ENCODE measurements at regions of chr3 and their contacts with region 1.

Region 1: DNA sequence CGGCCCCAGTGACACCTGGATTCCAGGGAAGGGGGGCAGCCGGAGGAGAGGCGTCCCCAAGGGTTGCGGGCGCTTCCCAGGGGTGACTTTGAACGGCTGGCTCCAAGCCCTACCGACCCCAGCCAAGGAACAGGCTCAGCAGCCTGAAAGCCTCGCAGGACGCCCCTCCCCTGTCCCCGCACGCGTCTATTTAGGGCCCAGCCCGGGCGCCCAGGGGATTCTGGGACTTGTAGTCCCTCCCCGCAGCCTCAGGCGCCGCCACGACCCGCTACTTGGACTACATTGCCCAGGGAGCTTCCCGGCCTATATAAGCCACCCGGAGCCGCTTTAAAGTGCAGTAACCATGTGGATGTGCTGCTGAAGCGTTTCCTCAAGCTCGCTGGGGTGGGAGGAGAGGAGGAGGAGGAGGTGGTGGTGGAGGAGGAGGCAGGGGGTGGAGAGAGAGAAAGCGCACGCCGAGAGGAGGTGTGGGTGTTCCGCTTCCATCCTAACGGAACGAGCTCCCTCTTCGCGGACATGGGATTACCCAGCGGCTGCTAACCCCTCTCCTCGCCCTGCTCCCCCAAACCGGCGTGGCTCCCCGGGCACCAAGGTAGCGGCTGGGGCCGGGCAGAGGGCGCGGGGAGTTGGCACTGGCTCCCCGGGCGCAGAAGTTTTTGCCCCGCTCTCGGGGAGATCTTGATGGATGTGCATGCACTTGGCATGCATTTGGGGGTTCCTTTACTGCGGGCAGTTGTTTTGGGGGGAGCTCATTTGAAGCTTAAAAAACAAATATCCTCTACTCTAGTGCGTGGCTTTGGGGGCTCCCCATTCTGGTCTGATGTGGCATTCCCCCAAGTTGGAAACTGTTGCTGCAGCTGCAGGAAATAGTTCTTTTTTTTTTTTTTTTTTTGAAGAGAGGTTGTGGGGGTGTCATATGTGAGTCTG is at the start of gene ITPR1:
- DNase-seq: peak; percentile 92
- ATAC-seq: peak; percentile 88
- H3K4me3 Mint-ChIP-seq: peak within 1 kb of the TSS; percentile 93
- H3K27ac Mint-ChIP-seq: peak within 1 kb of the TSS; percentile 92
- H3K4me1 Mint-ChIP-seq: peaks cover 49% of the 10 kb centered on the region
- H3K27me3 Mint-ChIP-seq: no peaks in the 10 kb centered on the region
- CTCF ChIP-seq: no peak
- total RNA-seq, gene ITPR1: 116 and 143 TPM in 2 replicates

Region 2: DNA sequence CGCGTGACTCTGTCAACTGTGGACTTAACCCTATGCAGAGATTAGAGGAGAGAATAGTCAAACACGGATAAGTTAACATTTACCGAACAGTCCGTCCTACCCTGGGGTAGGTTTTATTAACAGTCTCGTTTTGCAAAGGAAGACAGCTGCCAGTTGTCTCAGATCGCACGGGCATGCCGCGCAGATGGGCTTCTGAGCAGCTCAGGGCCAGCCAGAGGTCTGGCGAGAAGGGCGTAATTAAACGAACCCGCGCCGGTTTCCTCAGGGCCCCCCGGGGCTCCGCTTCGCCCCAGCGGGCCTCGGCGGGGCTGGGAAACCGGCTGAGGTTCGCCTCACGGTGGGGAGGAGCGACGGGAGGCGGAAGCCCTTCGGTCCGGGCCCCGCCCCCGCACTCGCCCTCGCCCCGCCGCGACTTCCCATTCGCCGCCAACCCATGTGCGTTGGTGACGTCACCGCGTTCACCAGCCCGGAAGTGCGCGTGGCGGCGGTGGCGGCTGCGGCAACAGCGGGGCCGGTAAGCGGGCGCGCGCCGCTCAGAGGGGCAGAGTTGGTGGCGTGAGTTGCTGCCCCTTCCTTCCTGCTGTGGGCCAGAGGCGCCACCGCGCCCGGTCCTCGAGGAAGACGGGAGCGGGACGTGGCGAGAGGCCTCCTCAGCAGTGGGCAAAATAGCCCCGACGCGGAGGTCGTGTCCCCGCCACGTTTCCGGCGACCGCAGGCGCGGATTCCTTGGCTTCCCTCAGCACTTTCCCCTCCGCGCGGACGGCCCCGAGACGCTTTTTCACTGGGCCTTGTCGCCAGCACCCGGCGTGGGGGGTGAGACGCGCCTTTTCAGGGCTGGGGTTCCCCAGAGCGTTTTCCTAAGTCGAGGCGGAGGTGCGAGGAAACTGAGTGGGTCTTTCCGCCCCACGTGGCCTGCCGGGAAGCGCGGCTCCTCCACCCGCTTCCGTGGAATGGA is 1366.5 kb before region 1 on chr3 and contains the start of gene TRNT1:
- CTCF ChIA-PET with region 1: no interaction called
- POLR2A ChIA-PET with region 1: interaction called, 3 read pairs
- intact Hi-C with region 1: loop called (anchors 2 kb)
- DNase-seq: peak; percentile 94
- ATAC-seq: peak; percentile 96
- H3K4me3 Mint-ChIP-seq: peak within 1 kb of the TSS; percentile 96
- H3K27ac Mint-ChIP-seq: peak within 1 kb of the TSS; percentile 93
- H3K4me1 Mint-ChIP-seq: peaks cover 28% of the 10 kb centered on the region
- H3K27me3 Mint-ChIP-seq: no peaks in the 10 kb centered on the region
- CTCF ChIP-seq: no peak
- total RNA-seq, gene TRNT1: 40.1 and 51.3 TPM in 2 replicates

Region 3: DNA sequence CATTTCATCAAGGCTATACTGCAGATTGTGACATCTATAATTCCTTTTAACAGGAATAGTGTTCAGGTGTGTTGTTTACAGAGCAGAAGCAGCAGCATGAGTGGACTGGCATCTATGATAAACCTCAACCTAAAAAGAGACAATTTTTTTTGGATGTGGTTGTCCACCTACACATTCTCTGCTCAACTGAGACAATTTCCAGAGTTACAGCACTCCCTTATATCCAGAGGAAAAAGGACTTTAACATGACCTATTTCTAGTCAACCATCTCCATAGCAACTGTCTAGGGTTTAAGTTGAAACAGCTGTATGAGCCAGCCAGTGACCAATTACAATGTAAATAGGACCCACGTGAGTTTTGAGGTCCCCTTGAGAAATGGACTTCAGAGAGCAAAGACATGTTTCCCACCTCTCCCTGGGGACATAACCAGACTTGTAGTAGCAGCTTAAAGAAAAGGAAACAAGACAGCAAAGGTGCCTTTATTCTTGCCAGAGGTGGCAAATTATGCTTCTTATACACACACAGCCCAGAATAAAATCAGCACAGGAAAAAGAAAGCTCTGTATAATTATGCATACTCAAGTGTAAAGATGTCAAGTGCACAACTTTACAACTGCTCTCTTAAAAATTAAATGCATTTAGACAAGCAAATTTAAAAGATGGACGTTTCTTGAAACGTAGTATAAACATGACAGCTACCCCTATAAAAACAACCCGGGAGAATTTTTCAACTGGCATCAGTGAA is 66.5 kb before region 1 on chr3:
- CTCF ChIA-PET with region 1: no interaction called
- POLR2A ChIA-PET with region 1: interaction called, 4 read pairs
- intact Hi-C with region 1: loop called (anchors 2 kb)
- DNase-seq: no peak
- ATAC-seq: peak; percentile 58
- H3K4me3 Mint-ChIP-seq: no peak overlapping the region
- H3K27ac Mint-ChIP-seq: peak overlapping the region; percentile 57
- H3K4me1 Mint-ChIP-seq: peaks cover 21% of the 10 kb centered on the region
- H3K27me3 Mint-ChIP-seq: no peaks in the 10 kb centered on the region
- CTCF ChIP-seq: no peak

Region 4: DNA sequence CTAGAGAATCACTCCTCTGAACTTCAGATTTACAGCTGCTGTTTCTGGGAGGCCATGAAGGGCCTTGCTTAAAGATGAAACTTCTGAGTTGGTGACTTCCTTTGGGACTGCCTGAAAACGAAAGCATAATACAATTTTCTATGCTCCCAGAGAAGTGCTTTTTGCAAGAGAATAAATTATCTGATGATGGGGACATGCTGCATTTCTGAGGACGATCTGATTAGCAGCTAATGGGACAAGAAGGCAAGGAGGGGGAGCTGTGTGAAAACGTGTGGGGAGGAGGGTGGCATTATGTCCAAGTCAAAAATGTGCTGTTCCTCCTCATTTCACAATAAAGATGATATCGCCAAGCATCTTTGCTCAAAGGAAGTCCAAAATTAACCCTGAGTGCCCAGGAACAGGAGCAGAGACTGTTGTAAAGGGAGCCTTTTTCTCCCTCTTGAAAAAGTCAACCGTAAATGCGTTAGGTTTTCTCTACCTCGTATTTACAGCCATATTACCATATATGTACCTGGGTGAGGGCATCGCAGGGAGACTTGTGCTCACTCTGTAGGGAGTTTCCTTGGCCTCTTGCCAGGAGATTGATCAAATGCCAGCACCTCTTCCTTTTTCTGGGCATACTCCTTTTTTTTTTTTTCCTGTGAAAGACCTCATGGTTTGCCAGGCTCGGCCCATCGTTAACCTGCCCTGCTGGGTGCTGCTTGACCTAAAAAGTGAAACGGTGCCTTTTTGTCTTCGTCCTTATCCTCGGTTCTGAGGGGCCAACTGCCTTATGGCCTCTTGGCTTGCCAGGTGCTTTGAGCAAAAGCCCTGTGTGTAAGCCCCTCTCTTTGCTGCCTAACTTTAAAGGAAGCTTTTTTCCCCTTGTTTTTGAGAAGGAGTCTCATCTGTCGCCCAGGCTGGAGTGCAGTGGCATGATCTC is 11.3 kb after region 1 on chr3:
- CTCF ChIA-PET with region 1: interaction called, 9 read pairs
- POLR2A ChIA-PET with region 1: interaction called, 288 read pairs
- intact Hi-C with region 1: loop called (anchors 1 kb)
- DNase-seq: no peak
- ATAC-seq: peak; percentile 27
- H3K4me3 Mint-ChIP-seq: peak overlapping the region; percentile 80
- H3K27ac Mint-ChIP-seq: peak overlapping the region; percentile 87
- H3K4me1 Mint-ChIP-seq: peaks cover 89% of the 10 kb centered on the region
- H3K27me3 Mint-ChIP-seq: no peaks in the 10 kb centered on the region
- CTCF ChIP-seq: no peak

Region 5: GRCh38 chr3:4584456-4585249 is 91.4 kb after region 1 on chr3:
- CTCF ChIA-PET with region 1: no interaction called
- POLR2A ChIA-PET with region 1: interaction called, 10 read pairs
- intact Hi-C with region 1: no loop called
- DNase-seq: no peak
- ATAC-seq: peak; percentile 30
- H3K4me3 Mint-ChIP-seq: peak overlapping the region; percentile 85
- H3K27ac Mint-ChIP-seq: peak overlapping the region; percentile 91
- H3K4me1 Mint-ChIP-seq: peaks cover 85% of the 10 kb centered on the region
- H3K27me3 Mint-ChIP-seq: no peaks in the 10 kb centered on the region
- CTCF ChIP-seq: no peak

Region 6: GRCh38 chr3:4613366-4613765 is 120.1 kb after region 1 on chr3:
- CTCF ChIA-PET with region 1: no interaction called
- POLR2A ChIA-PET with region 1: no interaction called
- intact Hi-C with region 1: no loop called
- DNase-seq: no peak
- ATAC-seq: no peak
- H3K4me3 Mint-ChIP-seq: no peak overlapping the region
- H3K27ac Mint-ChIP-seq: peak overlapping the region; percentile 21
- H3K4me1 Mint-ChIP-seq: peaks cover 24% of the 10 kb centered on the region
- H3K27me3 Mint-ChIP-seq: no peaks in the 10 kb centered on the region
- CTCF ChIP-seq: no peak

Region 7: DNA sequence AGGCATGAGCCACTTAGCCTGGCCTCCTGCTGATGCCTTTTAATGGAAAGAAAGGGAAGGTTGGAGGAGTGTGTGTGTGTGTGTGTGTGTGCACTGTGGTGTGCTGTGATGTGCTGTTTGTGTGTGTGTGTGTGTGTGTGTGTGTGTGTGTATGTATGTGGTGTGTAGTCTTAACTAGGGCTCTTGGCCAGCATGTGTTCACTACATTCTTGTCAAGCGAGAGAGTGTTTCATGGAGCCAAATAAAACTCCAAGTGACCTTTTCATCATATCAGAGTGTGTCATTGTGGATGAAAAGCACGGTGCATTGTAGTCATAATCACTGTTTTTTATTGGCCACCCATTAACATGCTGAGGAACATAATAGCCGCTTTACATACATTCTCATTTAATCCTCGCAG is 455.1 kb after region 1 on chr3:
- CTCF ChIA-PET with region 1: no interaction called
- POLR2A ChIA-PET with region 1: no interaction called
- intact Hi-C with region 1: no loop called
- DNase-seq: no peak
- ATAC-seq: no peak
- H3K4me3 Mint-ChIP-seq: no peak overlapping the region
- H3K27ac Mint-ChIP-seq: no peak overlapping the region
- H3K4me1 Mint-ChIP-seq: no peaks in the 10 kb centered on the region
- H3K27me3 Mint-ChIP-seq: no peaks in the 10 kb centered on the region
- CTCF ChIP-seq: no peak

Region 8: GRCh38 chr3:4986782-4987537 is 493.7 kb after region 1 on chr3:
- CTCF ChIA-PET with region 1: no interaction called
- POLR2A ChIA-PET with region 1: interaction called, 5 read pairs
- intact Hi-C with region 1: loop called (anchors 10 kb)
- DNase-seq: peak; percentile 64
- ATAC-seq: peak; percentile 33
- H3K4me3 Mint-ChIP-seq: peak overlapping the region; percentile 83
- H3K27ac Mint-ChIP-seq: peak overlapping the region; percentile 76
- H3K4me1 Mint-ChIP-seq: peaks cover 76% of the 10 kb centered on the region
- H3K27me3 Mint-ChIP-seq: no peaks in the 10 kb centered on the region
- CTCF ChIP-seq: no peak